CD4-positive, alpha-beta T cell (primary cell): ENCODE measurements at regions of chr18 and their contacts with region 1.

Region 1: GRCh38 chr18:23406271-23406787 is 46.8 kb upstream of the RIOK3 start:
- DNase-seq: no peak
- ATAC-seq: no peak
- H3K4me3 ChIP-seq: no peak overlapping the region
- H3K4me3 Mint-ChIP-seq: no peak overlapping the region
- H3K27ac ChIP-seq: no peak overlapping the region
- H3K27ac Mint-ChIP-seq: no peak overlapping the region
- H3K4me1 ChIP-seq: no peaks in the 10 kb centered on the region
- H3K4me1 Mint-ChIP-seq: no peaks in the 10 kb centered on the region
- H3K27me3 ChIP-seq: no peaks in the 10 kb centered on the region
- H3K27me3 Mint-ChIP-seq: no peaks in the 10 kb centered on the region
- CTCF ChIP-seq: no peak

Region 2: DNA sequence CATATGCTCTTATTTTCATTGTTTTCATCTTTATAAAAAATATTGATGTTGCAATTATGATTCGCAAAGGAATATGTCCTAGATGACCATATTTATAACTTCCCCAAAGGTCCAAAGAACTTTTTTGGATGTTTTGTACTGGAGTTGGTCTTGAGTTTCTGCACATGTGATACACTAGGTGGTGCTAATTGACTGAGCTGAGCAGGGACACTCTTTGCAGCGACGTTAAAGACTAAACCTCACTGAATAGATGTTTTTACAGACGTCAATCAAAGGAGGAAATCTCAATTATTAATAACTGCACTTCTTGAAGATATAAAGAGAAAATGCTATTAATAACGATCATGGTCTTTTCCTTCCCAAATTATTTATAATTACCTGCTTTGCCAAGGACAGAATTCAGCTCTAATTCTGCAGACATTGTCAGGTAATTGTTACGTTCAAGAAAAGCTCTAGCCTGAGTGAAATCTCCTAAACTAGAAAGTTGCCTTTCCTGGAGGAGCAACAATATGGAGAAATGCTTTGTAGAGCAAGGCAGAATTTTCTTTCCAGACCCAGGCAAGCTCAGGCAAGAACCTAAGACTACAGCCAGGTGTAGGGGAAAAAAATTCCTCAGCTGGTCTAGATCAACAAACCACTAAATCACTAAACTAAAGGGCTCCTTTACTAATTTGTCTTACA is 592.5 kb before region 1 on chr18:
- CTCF ChIA-PET with region 1: interaction called, 3 read pairs
- POLR2A ChIA-PET with region 1: no interaction called
- intact Hi-C with region 1: loop called in 1 of 2 experiments (anchors 1 kb)
- DNase-seq: peak in 3 of 14 experiments; percentile 13 to 40 (median 36)
- ATAC-seq: no peak
- H3K4me3 ChIP-seq: no peak overlapping the region
- H3K4me3 Mint-ChIP-seq: no peak overlapping the region
- H3K27ac ChIP-seq: no peak overlapping the region
- H3K27ac Mint-ChIP-seq: no peak overlapping the region
- H3K4me1 ChIP-seq: no peaks in the 10 kb centered on the region
- H3K4me1 Mint-ChIP-seq: no peaks in the 10 kb centered on the region
- H3K27me3 ChIP-seq: peaks cover 4 to 8% of the 10 kb centered on the region in 2 experiments
- H3K27me3 Mint-ChIP-seq: peaks cover 55% of the 10 kb centered on the region
- CTCF ChIP-seq: no peak